OCI-LY7 (cell line): ENCODE measurements at regions of chr18 and their contacts with region 1.

Region 1: GRCh38 chr18:50429207-50429948 is 54.5 kb downstream of the SKA1 start:
- DNase-seq: peak; percentile 32
- H3K4me3 ChIP-seq: no peak overlapping the region
- H3K27ac ChIP-seq: no peak overlapping the region
- H3K4me1 ChIP-seq: no peaks in the 10 kb centered on the region
- CTCF ChIP-seq: peak; percentile 71

Region 2: GRCh38 chr18:49920731-49921130 is 508.6 kb before region 1 on chr18:
- CTCF ChIA-PET with region 1: no interaction called
- POLR2A ChIA-PET with region 1: no interaction called
- intact Hi-C with region 1: no loop called
- DNase-seq: no peak
- H3K4me3 ChIP-seq: no peak overlapping the region
- H3K27ac ChIP-seq: no peak overlapping the region
- H3K4me1 ChIP-seq: no peaks in the 10 kb centered on the region
- CTCF ChIP-seq: no peak

Region 3: DNA sequence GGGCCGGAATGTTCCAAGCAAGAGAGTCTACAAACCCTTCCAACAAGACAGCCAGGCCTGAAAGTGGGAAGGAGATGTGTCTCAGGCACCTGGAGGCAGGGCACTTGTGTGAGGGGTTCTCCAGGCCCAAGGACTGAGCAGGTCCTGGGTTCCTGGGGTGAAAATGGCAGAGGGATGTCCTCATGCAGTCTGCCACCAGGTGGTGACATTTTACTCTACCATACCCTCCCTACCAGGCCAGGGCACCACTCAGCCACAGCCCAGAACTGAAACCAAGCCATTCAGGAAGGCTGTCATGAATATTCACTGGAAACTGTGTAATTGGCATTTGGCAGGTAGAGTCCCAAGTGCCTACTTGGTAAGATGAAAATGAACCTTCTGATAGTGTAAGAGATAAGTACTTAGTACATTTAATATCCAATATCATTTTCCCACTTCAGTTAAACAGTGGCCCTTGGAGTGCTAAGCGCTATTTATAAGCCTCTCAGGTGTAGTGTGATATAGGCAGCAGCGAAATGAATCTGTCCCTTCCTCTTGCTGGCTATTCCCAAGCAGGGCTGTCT is 419.5 kb before region 1 on chr18:
- CTCF ChIA-PET with region 1: no interaction called
- POLR2A ChIA-PET with region 1: no interaction called
- intact Hi-C with region 1: loop called (anchors 5 kb)
- DNase-seq: peak; percentile 36
- H3K4me3 ChIP-seq: no peak overlapping the region
- H3K27ac ChIP-seq: no peak overlapping the region
- H3K4me1 ChIP-seq: no peaks in the 10 kb centered on the region
- CTCF ChIP-seq: peak; percentile 65

Region 4: GRCh38 chr18:50071397-50071796 is 358.0 kb before region 1 on chr18:
- CTCF ChIA-PET with region 1: no interaction called
- POLR2A ChIA-PET with region 1: no interaction called
- intact Hi-C with region 1: no loop called
- DNase-seq: no peak
- H3K4me3 ChIP-seq: no peak overlapping the region
- H3K27ac ChIP-seq: no peak overlapping the region
- H3K4me1 ChIP-seq: no peaks in the 10 kb centered on the region
- CTCF ChIP-seq: no peak

Region 5: DNA sequence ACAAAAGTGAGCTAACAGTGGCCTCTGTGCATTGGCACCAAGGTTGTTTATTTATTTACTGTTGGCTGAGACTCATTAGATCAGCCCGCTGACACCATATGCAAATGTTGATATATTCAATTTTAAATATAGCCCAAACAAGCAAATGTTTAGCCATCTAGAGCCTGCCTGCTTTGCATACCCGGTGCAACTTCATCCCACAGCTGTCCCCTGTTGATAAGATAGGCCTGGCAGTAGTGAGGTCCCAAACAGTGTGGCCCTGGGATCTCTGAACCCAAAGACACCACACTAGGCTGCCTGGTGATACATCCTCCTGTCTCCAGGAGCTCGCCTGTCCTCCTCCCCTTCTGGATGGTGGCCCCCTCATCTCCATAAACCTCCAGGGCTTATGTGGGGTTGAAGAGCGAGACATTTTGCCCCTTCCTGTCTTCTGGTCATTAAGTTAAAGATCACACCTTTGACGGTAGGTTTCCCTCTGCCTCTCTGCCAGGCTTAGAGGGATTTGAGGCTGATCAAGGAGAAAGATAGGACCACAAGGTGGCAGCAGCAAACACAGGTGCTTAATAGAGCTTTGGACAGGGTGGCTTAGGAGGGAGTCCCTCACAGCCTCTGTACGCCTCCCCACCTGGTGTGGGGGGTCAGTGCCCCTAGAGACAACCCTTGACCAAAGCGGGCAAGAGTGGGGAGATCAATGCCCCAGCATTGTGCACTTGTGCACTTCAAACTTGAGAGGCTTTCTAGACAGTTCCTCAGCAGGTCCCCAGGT is 210.8 kb before region 1 on chr18:
- CTCF ChIA-PET with region 1: no interaction called
- POLR2A ChIA-PET with region 1: no interaction called
- intact Hi-C with region 1: loop called (anchors 10 kb)
- DNase-seq: peak; percentile 54
- H3K4me3 ChIP-seq: no peak overlapping the region
- H3K27ac ChIP-seq: no peak overlapping the region
- H3K4me1 ChIP-seq: no peaks in the 10 kb centered on the region
- CTCF ChIP-seq: peak; percentile 67